Activated naive CD4-positive, alpha-beta T cell treated with anti-CD3 and anti-CD28 coated beads, Interleukin-2, amount 10 ng/mL, durations not matched to agents 7 days and 5 days (primary cell): ENCODE measurements at regions of chr11 and their contacts with region 1.

Region 1: GRCh38 chr11:13384908-13385640 is 77.9 kb downstream of the BTBD10 start:
- DNase-seq: peak; percentile 46
- H3K4me3 Mint-ChIP-seq: no peak overlapping the region
- H3K27ac Mint-ChIP-seq: no peak overlapping the region
- H3K4me1 Mint-ChIP-seq: no peaks in the 10 kb centered on the region
- H3K27me3 Mint-ChIP-seq: no peaks in the 10 kb centered on the region

Region 2: GRCh38 chr11:13354335-13354734 is 30.7 kb before region 1 on chr11:
- CTCF ChIA-PET with region 1: interaction called, 11 read pairs
- DNase-seq: no peak
- H3K4me3 Mint-ChIP-seq: no peak overlapping the region
- H3K27ac Mint-ChIP-seq: no peak overlapping the region
- H3K4me1 Mint-ChIP-seq: peaks cover 6% of the 10 kb centered on the region
- H3K27me3 Mint-ChIP-seq: no peaks in the 10 kb centered on the region

Region 3: GRCh38 chr11:13538044-13538443 is 153.0 kb after region 1 on chr11:
- CTCF ChIA-PET with region 1: no interaction called
- DNase-seq: no peak
- H3K4me3 Mint-ChIP-seq: no peak overlapping the region
- H3K27ac Mint-ChIP-seq: no peak overlapping the region
- H3K4me1 Mint-ChIP-seq: no peaks in the 10 kb centered on the region
- H3K27me3 Mint-ChIP-seq: no peaks in the 10 kb centered on the region